Ovary (tissue), 10 donors: ENCODE measurements at regions of chr4 and their contacts with region 1.

Region 1: GRCh38 chr4:70927502-70928137 is 25.5 kb downstream of the MOB1B start:
- DNase-seq: no peak
- H3K4me3 ChIP-seq: no peak overlapping the region
- H3K27ac ChIP-seq: no peak overlapping the region
- H3K4me1 ChIP-seq: peaks cover 1% of the 10 kb centered on the region
- H3K27me3 ChIP-seq: no peaks in the 10 kb centered on the region
- CTCF ChIP-seq: no peak
- EP300 ChIP-seq: no peak
- POLR2A ChIP-seq: no peak

Region 2: DNA sequence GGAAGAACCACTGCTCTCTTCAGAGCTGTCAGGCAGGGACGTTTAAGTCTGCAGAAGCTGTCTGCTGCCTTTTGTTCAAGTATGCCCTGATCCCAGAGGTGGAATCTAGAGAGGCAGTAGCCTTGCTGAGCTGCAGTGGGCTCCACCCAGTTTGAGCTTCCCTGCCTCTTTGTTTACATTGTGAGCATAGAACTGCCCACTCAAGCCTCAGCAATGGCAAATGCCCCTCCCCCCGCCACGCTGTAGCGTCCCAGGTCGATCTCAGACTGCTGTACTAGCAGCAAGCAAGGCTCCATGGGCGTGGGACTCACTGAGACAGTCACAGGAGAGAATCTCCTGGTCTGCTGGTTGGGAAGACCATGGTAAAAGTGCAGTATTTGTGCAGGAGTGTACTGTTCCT is 490.4 kb before region 1 on chr4:
- intact Hi-C with region 1: no loop called
- DNase-seq: no peak
- H3K4me3 ChIP-seq: no peak overlapping the region
- H3K27ac ChIP-seq: no peak overlapping the region
- H3K4me1 ChIP-seq: no peaks in the 10 kb centered on the region
- H3K27me3 ChIP-seq: no peaks in the 10 kb centered on the region
- CTCF ChIP-seq: no peak
- EP300 ChIP-seq: no peak
- POLR2A ChIP-seq: no peak

Region 3: DNA sequence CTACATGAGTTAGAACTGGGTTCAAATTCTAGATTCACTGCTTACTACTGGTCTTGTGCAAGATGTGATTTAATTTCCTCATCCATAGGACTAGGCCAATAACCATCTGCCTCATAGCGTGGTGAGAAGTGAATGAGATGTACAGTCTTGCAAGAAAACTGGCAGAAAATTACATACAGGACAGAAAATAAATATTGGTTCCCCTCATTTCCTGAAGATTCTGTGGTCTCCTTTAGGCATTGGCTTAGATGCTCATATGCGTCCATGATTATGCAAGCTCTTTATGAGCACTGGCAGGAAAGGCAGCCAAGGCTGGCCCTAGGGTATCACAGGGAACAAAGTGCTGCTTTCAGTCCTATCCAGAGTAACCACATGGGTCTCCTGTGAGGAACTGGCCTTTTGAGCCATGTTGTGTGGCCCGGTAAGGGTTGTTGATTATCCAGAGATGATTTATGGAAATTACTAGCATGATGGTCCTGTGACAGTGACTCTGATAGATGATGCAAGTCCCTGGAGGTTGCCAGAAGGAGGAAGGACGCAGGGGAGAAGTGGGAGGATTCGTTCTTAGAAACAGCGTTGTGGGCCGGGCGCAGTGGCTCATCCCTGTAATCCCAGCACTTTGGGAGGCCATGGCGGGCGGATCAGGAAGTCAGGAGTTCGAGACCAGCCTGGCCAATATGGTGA is 35.4 kb before region 1 on chr4:
- intact Hi-C with region 1: loop called in 1 of 4 experiments (anchors 5 kb)
- DNase-seq: no peak
- H3K4me3 ChIP-seq: no peak overlapping the region
- H3K27ac ChIP-seq: no peak overlapping the region
- H3K4me1 ChIP-seq: peaks cover 8% of the 10 kb centered on the region
- H3K27me3 ChIP-seq: no peaks in the 10 kb centered on the region
- CTCF ChIP-seq: no peak
- EP300 ChIP-seq: no peak
- POLR2A ChIP-seq: no peak